BJ (cell line): ENCODE measurements at regions of chr3 and their contacts with region 1.

Region 1: DNA sequence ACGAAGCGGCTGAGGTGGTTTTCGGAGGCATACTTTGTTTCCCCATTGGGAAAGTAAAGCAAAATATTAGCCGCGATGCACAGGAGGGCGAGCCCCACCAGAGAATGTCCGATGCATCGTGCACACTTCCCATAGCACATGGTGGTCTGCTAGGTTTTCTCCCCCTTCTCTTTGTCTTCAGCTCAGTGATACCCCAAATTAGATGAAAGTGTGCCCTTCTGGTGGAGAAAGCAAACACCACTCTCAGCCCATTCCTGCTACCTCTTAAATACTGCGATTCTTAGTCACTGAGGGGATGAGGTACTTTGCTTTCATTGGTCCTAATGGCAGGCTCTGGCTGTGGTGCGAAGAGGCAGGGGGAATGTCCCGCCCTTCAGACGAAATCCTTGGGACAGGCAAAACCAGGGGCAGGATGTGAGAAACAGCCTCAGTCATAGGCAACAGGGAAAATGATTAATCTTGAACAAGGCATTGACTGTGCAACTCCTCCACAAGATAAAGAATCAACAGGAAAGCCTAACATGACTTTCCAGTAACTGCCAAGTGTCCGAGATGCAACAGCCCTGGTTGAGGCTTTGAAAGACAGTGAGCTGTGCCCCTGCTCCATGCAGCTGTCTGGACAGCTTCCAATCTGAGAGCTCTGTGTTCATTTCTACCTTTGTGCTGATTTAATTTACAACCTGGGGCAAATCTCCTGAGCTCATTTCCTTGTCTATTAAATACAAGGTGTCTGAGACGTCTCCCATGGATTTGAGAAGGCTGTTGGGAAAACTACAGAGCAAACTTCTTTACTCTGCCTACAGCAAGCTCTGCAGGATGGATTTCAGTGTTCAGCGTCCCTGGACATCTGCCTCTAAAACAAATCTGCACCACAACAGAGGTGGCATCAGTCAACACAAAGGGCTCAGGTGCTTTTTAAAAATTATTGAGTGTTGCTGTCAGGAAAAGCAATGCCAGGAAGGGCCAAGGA is at the start of gene TM4SF1:
- DNase-seq: no peak
- H3K4me3 ChIP-seq: 0 out of 2 replicates have a peak within 1 kb of the TSS, but pooled peaks have one; percentile 3
- H3K27me3 ChIP-seq: no peaks in the 10 kb centered on the region
- CTCF ChIP-seq: no peak
- polyA plus RNA-seq, gene TM4SF1: 37.5 and 48.0 TPM in 2 replicates

Region 2: GRCh38 chr3:148889828-148890227 is 487.9 kb before region 1 on chr3:
- CTCF ChIA-PET with region 1: no interaction called
- POLR2A ChIA-PET with region 1: interaction called, 11 read pairs
- DNase-seq: no peak
- H3K4me3 ChIP-seq: no peak overlapping the region
- H3K27me3 ChIP-seq: no peaks in the 10 kb centered on the region
- CTCF ChIP-seq: no peak